ENCODE measurements at regions of chr6 and their contacts with region 1.

Region 1: GRCh38 chr6:87349896-87350295 is 5.3 kb downstream of the C6orf163 start:
- DNase-seq: no peak
- H3K4me3 ChIP-seq: no peak overlapping the region
- H3K27ac ChIP-seq: no peak overlapping the region
- H3K4me1 ChIP-seq: no peaks in the 10 kb centered on the region
- H3K27me3 ChIP-seq: no peaks in the 10 kb centered on the region
- CTCF ChIP-seq: no peak

Region 2: DNA sequence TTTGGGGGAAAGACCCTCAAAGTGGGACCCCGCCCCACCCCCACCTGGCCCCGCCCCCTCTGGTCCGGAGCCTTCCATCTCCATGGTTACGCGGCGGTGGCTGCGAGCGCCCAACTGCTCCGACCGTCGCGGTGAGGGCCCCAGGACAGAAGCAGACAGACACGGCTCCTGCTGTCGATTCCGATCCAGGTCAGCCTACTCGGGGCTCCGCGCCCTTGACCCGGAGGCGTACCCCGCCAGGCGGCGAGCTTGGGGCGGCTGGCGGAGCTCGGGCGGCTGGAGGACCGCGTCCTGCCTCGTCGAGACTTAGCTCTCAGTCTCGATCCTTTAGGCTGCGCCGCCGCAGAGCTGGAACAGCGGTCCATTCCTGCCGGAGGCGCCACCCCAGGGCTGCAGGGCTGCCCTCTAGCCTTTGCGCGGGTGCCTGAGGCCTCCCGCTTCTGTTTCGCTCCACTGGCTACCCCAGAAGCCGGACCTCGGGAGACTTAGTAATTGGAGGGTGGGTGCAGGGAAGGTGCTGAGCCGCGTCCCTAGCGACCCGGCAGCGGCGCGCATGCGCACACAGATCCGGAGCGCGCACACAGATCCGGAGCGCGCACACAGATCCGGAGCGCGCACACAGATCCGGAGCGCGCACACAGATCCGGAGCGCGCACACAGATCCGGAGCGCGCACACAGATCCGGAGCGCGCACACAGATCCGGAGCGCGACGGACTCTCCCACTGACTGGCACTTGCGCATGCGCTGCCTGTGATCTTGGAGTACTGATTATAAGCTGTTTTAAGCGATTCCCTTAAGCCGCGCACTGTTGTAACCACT is 58.2 kb after region 1 on chr6 and contains the start of gene CFAP206:
- CTCF ChIA-PET with region 1: no interaction called
- POLR2A ChIA-PET with region 1: no interaction called
- intact Hi-C with region 1: no loop called
- DNase-seq: peak; percentile 67 to 79
- H3K4me3 ChIP-seq: peak within 1 kb of the TSS; percentile 94
- H3K27ac ChIP-seq: peak within 1 kb of the TSS; percentile 34; the same call in 1 of the 2 replicates
- H3K4me1 ChIP-seq: 0 out of 2 replicates have a peak, but pooled peaks cover 6% of the 10 kb centered on the region
- H3K27me3 ChIP-seq: no peaks in the 10 kb centered on the region
- CTCF ChIP-seq: no peak
- total RNA-seq, gene CFAP206: 2.9 and 3.2 TPM in 2 replicates

Region 3: GRCh38 chr6:87753131-87753685 is 403.3 kb after region 1 on chr6:
- CTCF ChIA-PET with region 1: no interaction called
- POLR2A ChIA-PET with region 1: interaction called, 17 read pairs
- intact Hi-C with region 1: no loop called
- DNase-seq: no peak
- H3K4me3 ChIP-seq: no peak overlapping the region
- H3K27ac ChIP-seq: no peak overlapping the region
- H3K4me1 ChIP-seq: no peaks in the 10 kb centered on the region
- H3K27me3 ChIP-seq: no peaks in the 10 kb centered on the region
- CTCF ChIP-seq: no peak